ENCODE measurements at regions of chr2 and their contacts with region 1.

Region 1: GRCh38 chr2:85288244-85288725 is 39.5 kb downstream of the TGOLN2 start:
- DNase-seq: no peak
- H3K4me3 Mint-ChIP-seq: no peak overlapping the region
- H3K27ac Mint-ChIP-seq: no peak overlapping the region
- H3K4me1 Mint-ChIP-seq: peaks cover 28% of the 10 kb centered on the region
- H3K27me3 Mint-ChIP-seq: no peaks in the 10 kb centered on the region

Region 2: DNA sequence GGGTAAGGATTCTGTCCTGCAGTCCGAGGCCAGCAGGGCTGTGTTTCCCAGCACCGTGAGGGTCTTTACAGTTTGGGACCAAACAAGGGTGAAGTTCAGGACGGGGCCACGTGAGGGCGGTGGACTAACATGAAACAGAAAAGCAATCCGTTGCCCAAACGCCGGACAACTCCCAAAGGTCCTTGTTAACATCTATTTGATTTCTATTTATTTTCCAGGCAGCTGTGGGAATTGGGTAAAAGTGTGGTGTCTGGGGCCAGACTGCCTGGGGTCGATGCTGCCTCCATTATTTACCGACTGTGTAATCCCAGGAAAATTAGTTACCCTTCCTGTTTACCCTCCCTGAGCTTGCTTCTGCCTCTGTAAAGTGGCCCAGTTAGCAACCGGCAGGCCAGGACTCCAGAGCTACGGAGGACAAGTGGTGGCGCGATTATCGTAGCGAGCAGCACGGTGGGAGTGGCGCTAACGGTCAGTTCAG is 221.4 kb before region 1 on chr2:
- CTCF ChIA-PET with region 1: interaction called, 10 read pairs
- POLR2A ChIA-PET with region 1: no interaction called
- DNase-seq: peak; percentile 45
- H3K4me3 Mint-ChIP-seq: no peak overlapping the region
- H3K27ac Mint-ChIP-seq: no peak overlapping the region
- H3K4me1 Mint-ChIP-seq: peaks cover 2% of the 10 kb centered on the region
- H3K27me3 Mint-ChIP-seq: peaks cover 32% of the 10 kb centered on the region

Region 3: DNA sequence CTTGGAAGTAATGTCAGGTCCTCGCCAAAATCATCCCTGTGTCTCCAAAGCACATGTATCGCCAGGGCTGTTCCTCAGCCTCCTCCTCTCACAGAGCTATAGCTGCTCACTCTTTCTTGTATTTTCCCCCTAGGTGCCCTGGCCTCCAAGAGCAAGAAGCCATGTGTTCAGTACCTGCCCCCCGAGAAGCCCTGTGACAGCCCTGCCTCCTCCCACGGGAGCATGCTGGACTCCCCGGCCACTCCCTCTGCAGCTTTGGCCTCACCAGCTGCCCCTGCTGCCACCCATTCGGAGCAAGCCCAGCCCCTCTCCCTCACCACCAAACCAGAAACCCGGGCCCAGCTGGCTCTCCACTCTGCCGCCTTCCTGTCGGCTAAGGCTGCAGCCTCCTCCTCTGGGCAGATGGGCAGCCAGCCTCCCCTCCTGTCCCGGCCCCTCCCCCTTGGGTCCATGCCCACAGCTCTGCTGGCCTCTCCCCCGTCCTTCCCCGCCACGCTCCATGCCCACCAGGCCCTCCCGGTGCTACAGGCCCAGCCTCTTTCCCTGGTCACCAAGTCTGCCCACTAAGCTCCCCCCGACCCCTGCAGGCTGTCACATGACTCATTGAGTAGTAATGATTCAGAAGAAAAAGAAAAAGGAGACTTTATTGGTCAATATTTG is 20.7 kb after region 1 on chr2:
- CTCF ChIA-PET with region 1: no interaction called
- POLR2A ChIA-PET with region 1: no interaction called
- DNase-seq: no peak
- H3K4me3 Mint-ChIP-seq: no peak overlapping the region
- H3K27ac Mint-ChIP-seq: no peak overlapping the region
- H3K4me1 Mint-ChIP-seq: peaks cover 33% of the 10 kb centered on the region
- H3K27me3 Mint-ChIP-seq: peaks cover 6% of the 10 kb centered on the region

Measured in activated CD4-positive, alpha-beta memory T cell treated with anti-CD3 and anti-CD28 coated beads, Interleukin-2, amount 10 ng/mL, durations not matched to agents 7 days and 5 days (primary cell).